ENCODE measurements at regions of chr3 and their contacts with region 1.

Region 1: DNA sequence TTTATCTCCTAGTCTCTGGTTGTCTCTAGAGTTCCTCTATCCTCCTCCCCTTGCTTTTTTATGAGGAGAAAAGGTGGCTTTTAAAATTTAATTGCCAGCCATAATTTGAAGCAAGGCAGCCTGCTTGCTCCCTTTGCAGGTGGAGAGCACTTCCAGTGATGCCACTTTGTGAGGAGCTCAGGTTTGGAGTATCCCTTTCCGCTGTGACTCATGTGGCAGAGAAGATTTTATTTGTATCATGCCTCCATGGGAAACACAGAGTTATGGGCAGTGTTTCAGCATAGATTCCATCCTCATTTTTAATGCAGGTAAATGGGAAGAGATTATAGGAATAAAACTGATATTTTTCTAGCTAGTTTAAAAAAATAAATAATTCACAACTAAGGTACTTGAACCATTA is 7.0 kb downstream of the PPM1L start:
- DNase-seq: no peak
- ATAC-seq: no peak
- H3K4me3 ChIP-seq: no peak overlapping the region
- H3K27ac ChIP-seq: no peak overlapping the region
- H3K4me1 ChIP-seq: no peaks in the 10 kb centered on the region
- H3K27me3 ChIP-seq: no peaks in the 10 kb centered on the region; the same call in 1 of the 2 replicates
- CTCF ChIP-seq: no peak
- POLR2A ChIP-seq: no peak
- RAD21 ChIP-seq: no peak

Region 2: GRCh38 chr3:160738048-160738447 is 25.0 kb before region 1 on chr3:
- CTCF ChIA-PET with region 1: no interaction called
- POLR2A ChIA-PET with region 1: interaction called, 10 read pairs
- dilution Hi-C with region 1: no loop called
- in situ Hi-C with region 1: no loop called
- intact Hi-C with region 1: no loop called
- DNase-seq: no peak
- ATAC-seq: no peak
- H3K4me3 ChIP-seq: no peak overlapping the region
- H3K27ac ChIP-seq: no peak overlapping the region
- H3K4me1 ChIP-seq: no peaks in the 10 kb centered on the region
- H3K27me3 ChIP-seq: peaks cover 2% of the 10 kb centered on the region; the same call in 1 of the 2 replicates
- CTCF ChIP-seq: no peak
- POLR2A ChIP-seq: no peak
- RAD21 ChIP-seq: no peak

Region 3: DNA sequence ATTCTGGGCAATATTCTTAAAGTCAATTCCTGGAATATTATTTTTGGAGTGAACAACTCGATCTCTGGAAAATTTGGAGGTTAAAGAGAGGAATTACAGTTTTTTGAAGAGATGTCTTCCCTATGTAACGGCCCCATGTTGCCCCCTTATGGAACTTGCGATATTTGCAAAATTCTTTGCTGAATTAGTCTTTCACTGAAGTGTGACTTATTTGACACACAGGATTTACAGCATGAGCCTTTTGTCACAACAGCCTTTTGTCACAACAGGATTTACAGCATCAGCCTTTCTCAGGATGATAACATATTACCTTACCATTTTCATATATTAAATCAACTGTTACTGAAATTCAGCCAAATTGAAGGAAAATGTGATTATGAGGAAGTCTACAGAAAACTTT is 646.0 kb after region 1 on chr3:
- CTCF ChIA-PET with region 1: no interaction called
- POLR2A ChIA-PET with region 1: no interaction called
- dilution Hi-C with region 1: no loop called
- in situ Hi-C with region 1: no loop called
- intact Hi-C with region 1: no loop called
- DNase-seq: peak; percentile 23
- ATAC-seq: peak; percentile 75; the same call in 1 of the 2 replicates
- H3K4me3 ChIP-seq: no peak overlapping the region
- H3K27ac ChIP-seq: no peak overlapping the region
- H3K4me1 ChIP-seq: peaks cover 3% of the 10 kb centered on the region; the same call in 1 of the 2 replicates
- H3K27me3 ChIP-seq: no peaks in the 10 kb centered on the region
- CTCF ChIP-seq: peak; percentile 65
- POLR2A ChIP-seq: no peak
- RAD21 ChIP-seq: peak; percentile 60

Measured in IMR-90 (cell line).